ENCODE measurements at regions of chr15 and their contacts with region 1.

Region 1: GRCh38 chr15:62060113-62060895 is at the start of gene VPS13C:
- DNase-seq: peak; percentile 93
- ATAC-seq: peak; percentile 99 to 100 (median 99)
- H3K4me3 ChIP-seq: peak within 1 kb of the TSS; percentile 62 to 98 (median 89)
- H3K27ac ChIP-seq: peak within 1 kb of the TSS; percentile 66 to 96 (median 93)
- H3K4me1 ChIP-seq: peaks cover 0 to 38% (median 20%) of the 10 kb centered on the region in 9 donors
- H3K27me3 ChIP-seq: peaks cover 0 to 5% (median 0%) of the 10 kb centered on the region in 7 donors
- CTCF ChIP-seq: peak; percentile 58 to 88 (median 83)
- total RNA-seq, gene VPS13C: 28.5 to 59.0 (median 43.4) TPM

Region 2: GRCh38 chr15:62119227-62119864 is 59.0 kb after region 1 on chr15:
- intact Hi-C with region 1: loop called in 1 of 10 experiments (anchors 5 kb)
- DNase-seq: peak in 1 of 2 donors; percentile 29
- ATAC-seq: peak; percentile 44 to 91 (median 86)
- H3K4me3 ChIP-seq: peak overlapping the region in 6 of 10 donors; percentile 23 to 41 (median 27)
- H3K27ac ChIP-seq: peak overlapping the region; percentile 17 to 81 (median 64)
- H3K4me1 ChIP-seq: peaks cover 0 to 43% (median 15%) of the 10 kb centered on the region in 9 donors
- H3K27me3 ChIP-seq: no peaks in the 10 kb centered on the region
- CTCF ChIP-seq: peak in 4 of 9 donors; percentile 11 to 36 (median 23)

Measured in heart right ventricle (tissue), 16 donors.